CD4-positive, alpha-beta T cell (primary cell): ENCODE measurements at regions of chr17 and their contacts with region 1.

Region 1: GRCh38 chr17:21284319-21285163 is at the start of gene MAP2K3:
- DNase-seq: peak; percentile 80 to 98 (median 92)
- ATAC-seq: peak; percentile 66
- H3K4me3 ChIP-seq: peak within 1 kb of the TSS; percentile 98
- H3K4me3 Mint-ChIP-seq: peak within 1 kb of the TSS; percentile 98
- H3K27ac ChIP-seq: peak within 1 kb of the TSS; percentile 87 to 94
- H3K27ac Mint-ChIP-seq: peak within 1 kb of the TSS; percentile 98
- H3K4me1 ChIP-seq: peaks cover 69% of the 10 kb centered on the region
- H3K4me1 Mint-ChIP-seq: peaks cover 55% of the 10 kb centered on the region
- H3K27me3 ChIP-seq: no peaks in the 10 kb centered on the region
- H3K27me3 Mint-ChIP-seq: no peaks in the 10 kb centered on the region
- CTCF ChIP-seq: no peak
- total RNA-seq, gene MAP2K3: 36.8 to 38.5 TPM

Region 2: GRCh38 chr17:20155258-20156195 is 1129.0 kb before region 1 on chr17:
- CTCF ChIA-PET with region 1: no interaction called
- POLR2A ChIA-PET with region 1: no interaction called
- intact Hi-C with region 1: loop called in 1 of 2 experiments (anchors 10 kb)
- DNase-seq: peak; percentile 85 to 98 (median 93)
- ATAC-seq: peak; percentile 96
- H3K4me3 ChIP-seq: peak overlapping the region; percentile 59
- H3K4me3 Mint-ChIP-seq: no peak overlapping the region
- H3K27ac ChIP-seq: peak overlapping the region in 1 of 2 donors; percentile 56
- H3K27ac Mint-ChIP-seq: no peak overlapping the region
- H3K4me1 ChIP-seq: peaks cover 18% of the 10 kb centered on the region
- H3K4me1 Mint-ChIP-seq: no peaks in the 10 kb centered on the region
- H3K27me3 ChIP-seq: no peaks in the 10 kb centered on the region
- H3K27me3 Mint-ChIP-seq: no peaks in the 10 kb centered on the region
- CTCF ChIP-seq: no peak

Region 3: DNA sequence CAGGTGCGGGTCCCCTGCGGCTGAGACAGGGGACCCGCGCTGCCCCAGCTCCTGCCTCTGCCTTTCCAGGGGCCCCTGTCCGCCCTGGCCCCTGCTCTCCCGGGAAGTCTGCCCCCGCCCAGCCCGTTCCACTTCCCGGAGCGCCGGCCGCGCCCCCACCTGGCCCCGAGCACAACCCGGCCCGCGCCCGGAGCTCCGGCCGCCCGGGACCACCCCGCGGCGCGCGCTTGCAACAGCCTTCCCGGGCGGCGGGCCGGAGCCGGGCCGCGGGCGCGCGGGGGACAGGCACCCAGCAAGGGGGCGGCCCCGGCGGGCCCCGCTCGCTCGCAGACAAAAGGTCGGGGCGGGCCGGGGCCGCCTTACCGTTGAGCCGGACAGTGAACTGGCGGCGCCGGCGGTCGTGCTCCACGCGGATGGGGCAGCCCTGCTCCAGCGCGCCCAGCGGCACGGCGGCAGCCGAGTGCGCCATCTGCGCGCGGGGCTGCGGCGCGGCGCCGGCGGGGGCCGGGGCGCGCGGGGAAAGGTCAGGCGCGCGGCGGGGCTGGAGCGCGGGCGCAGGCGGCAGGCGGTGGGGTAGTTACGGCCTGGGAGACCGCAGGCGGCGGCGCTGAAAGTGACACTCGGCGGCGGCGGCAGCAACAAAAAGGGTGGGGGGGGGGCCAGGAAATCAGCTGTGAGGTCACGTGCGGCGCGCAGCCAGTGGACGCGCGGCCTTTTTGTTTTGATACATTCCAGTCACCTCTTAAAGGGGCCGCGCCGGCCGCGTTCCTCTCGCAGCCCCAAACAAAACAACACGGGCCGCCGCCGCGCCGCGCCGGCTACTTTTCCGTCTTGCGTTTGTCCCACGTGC is 31.5 kb before region 1 on chr17 and contains the start of gene NATD1:
- CTCF ChIA-PET with region 1: interaction called, 5 read pairs
- POLR2A ChIA-PET with region 1: interaction called, 14 read pairs
- intact Hi-C with region 1: loop called (anchors 1 to 5 kb)
- DNase-seq: peak; percentile 64 to 92 (median 76)
- ATAC-seq: peak; percentile 80
- H3K4me3 ChIP-seq: peak within 1 kb of the TSS; percentile 67
- H3K4me3 Mint-ChIP-seq: peak within 1 kb of the TSS; percentile 93
- H3K27ac ChIP-seq: peak within 1 kb of the TSS; percentile 54 to 58
- H3K27ac Mint-ChIP-seq: peak within 1 kb of the TSS; percentile 94
- H3K4me1 ChIP-seq: peaks cover 27% of the 10 kb centered on the region
- H3K4me1 Mint-ChIP-seq: peaks cover 42% of the 10 kb centered on the region
- H3K27me3 ChIP-seq: no peaks in the 10 kb centered on the region
- H3K27me3 Mint-ChIP-seq: no peaks in the 10 kb centered on the region
- CTCF ChIP-seq: no peak
- total RNA-seq, gene NATD1: 5.9 to 6.1 TPM

Region 4: GRCh38 chr17:21318439-21318838 is 33.9 kb after region 1 on chr17:
- CTCF ChIA-PET with region 1: interaction called, 4 read pairs
- POLR2A ChIA-PET with region 1: no interaction called
- intact Hi-C with region 1: loop called (anchors 2 to 5 kb)
- DNase-seq: peak in 1 of 14 experiments; percentile 18
- ATAC-seq: no peak
- H3K4me3 ChIP-seq: no peak overlapping the region
- H3K4me3 Mint-ChIP-seq: no peak overlapping the region
- H3K27ac ChIP-seq: no peak overlapping the region
- H3K27ac Mint-ChIP-seq: no peak overlapping the region
- H3K4me1 ChIP-seq: peaks cover 14% of the 10 kb centered on the region
- H3K4me1 Mint-ChIP-seq: peaks cover 6% of the 10 kb centered on the region
- H3K27me3 ChIP-seq: no peaks in the 10 kb centered on the region
- H3K27me3 Mint-ChIP-seq: peaks cover 4% of the 10 kb centered on the region
- CTCF ChIP-seq: no peak

Region 5: GRCh38 chr17:21457051-21458026 is 172.8 kb after region 1 on chr17:
- CTCF ChIA-PET with region 1: interaction called, 5 read pairs
- POLR2A ChIA-PET with region 1: interaction called, 3 read pairs
- intact Hi-C with region 1: loop called (anchors 2 to 5 kb)
- DNase-seq: peak; percentile 85 to 96 (median 90)
- ATAC-seq: peak; percentile 87
- H3K4me3 ChIP-seq: no peak overlapping the region
- H3K4me3 Mint-ChIP-seq: no peak overlapping the region
- H3K27ac ChIP-seq: no peak overlapping the region
- H3K27ac Mint-ChIP-seq: peak overlapping the region; percentile 54
- H3K4me1 ChIP-seq: peaks cover 12% of the 10 kb centered on the region
- H3K4me1 Mint-ChIP-seq: peaks cover 18% of the 10 kb centered on the region
- H3K27me3 ChIP-seq: peaks cover 0 to 2% of the 10 kb centered on the region in 2 experiments
- H3K27me3 Mint-ChIP-seq: peaks cover 25% of the 10 kb centered on the region
- CTCF ChIP-seq: peak; percentile 92